Activated B cell treated with CpG ODN at 0.5 μM for 24 hours (primary cell): ENCODE measurements at regions of chr6 and their contacts with region 1.

Region 1: DNA sequence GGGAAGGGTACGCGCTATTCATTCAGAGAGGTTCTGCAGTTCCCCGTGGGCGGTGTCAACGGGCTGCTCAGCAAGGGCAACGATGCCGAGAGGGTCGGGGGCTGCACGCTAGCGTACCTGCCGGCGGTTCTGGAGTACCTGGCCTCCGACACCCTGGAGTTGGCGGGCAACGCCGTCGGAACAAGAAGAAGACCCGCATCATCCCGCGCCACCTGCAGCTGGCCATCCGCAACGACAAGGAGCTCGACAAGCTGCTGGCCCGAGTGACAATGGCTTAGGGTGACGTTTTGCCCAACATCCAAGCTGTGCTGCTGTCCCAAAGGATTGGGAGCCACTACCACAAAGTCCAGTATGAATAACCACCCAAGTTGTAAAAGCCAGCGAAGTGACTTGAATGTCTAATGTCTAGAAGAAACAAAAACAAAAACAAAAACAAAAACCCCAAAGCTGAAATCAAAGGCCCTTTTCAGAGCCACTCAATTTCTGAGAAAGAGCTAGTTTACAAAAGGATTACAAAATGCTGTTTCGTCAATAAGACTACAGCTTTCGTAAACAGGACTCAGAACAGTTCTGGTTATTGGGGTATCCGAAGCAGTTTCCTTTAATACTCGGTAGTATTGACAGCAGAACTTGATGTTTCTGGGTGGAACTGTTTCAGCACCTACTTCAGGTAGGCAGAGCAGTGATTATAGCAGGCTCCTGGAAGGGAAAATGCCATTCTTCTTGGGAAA is 21.9 kb upstream of the SLC17A4 start:
- DNase-seq: no peak
- ATAC-seq: no peak
- H3K4me3 Mint-ChIP-seq: no peak overlapping the region
- H3K27ac Mint-ChIP-seq: no peak overlapping the region
- H3K4me1 Mint-ChIP-seq: no peaks in the 10 kb centered on the region
- H3K27me3 Mint-ChIP-seq: peaks cover 45% of the 10 kb centered on the region
- CTCF ChIP-seq: no peak

Region 2: DNA sequence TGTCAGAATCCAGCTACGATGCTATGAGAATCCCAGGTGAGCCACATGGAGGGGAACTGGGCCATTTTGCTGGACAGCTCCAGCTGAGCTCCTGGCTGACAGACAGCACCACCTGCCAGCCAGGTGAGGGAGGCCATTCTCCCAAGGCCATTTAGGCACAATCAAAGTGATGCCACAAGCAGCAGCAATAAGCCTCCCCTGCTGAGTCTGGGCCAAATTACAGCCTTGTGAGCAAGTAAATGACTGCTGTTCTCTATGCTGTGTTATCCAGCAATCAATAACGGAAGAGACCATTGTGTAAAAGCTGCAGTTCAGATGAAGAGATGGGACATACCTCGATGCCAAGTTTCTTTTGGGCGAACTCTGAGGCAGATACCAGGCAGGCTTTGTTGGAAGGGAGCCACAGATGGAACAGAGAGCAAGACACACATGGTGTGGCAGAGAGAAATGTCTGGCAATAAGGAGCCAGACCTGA is 94.6 kb before region 1 on chr6:
- CTCF ChIA-PET with region 1: no interaction called
- POLR2A ChIA-PET with region 1: no interaction called
- intact Hi-C with region 1: no loop called
- DNase-seq: no peak
- ATAC-seq: no peak
- H3K4me3 Mint-ChIP-seq: no peak overlapping the region
- H3K27ac Mint-ChIP-seq: no peak overlapping the region
- H3K4me1 Mint-ChIP-seq: no peaks in the 10 kb centered on the region
- H3K27me3 Mint-ChIP-seq: peaks cover 42% of the 10 kb centered on the region
- CTCF ChIP-seq: no peak

Region 3: GRCh38 chr6:25913741-25914140 is 181.1 kb after region 1 on chr6:
- CTCF ChIA-PET with region 1: no interaction called
- POLR2A ChIA-PET with region 1: interaction called, 10 read pairs
- intact Hi-C with region 1: no loop called
- DNase-seq: no peak
- ATAC-seq: no peak
- H3K4me3 Mint-ChIP-seq: no peak overlapping the region
- H3K27ac Mint-ChIP-seq: no peak overlapping the region
- H3K4me1 Mint-ChIP-seq: peaks cover 4% of the 10 kb centered on the region
- H3K27me3 Mint-ChIP-seq: peaks cover 5% of the 10 kb centered on the region
- CTCF ChIP-seq: no peak

Region 4: GRCh38 chr6:27002447-27002846 is 1269.8 kb after region 1 on chr6:
- CTCF ChIA-PET with region 1: no interaction called
- POLR2A ChIA-PET with region 1: no interaction called
- intact Hi-C with region 1: no loop called
- DNase-seq: no peak
- ATAC-seq: no peak
- H3K4me3 Mint-ChIP-seq: no peak overlapping the region
- H3K27ac Mint-ChIP-seq: no peak overlapping the region
- H3K4me1 Mint-ChIP-seq: no peaks in the 10 kb centered on the region
- H3K27me3 Mint-ChIP-seq: peaks cover 4% of the 10 kb centered on the region
- CTCF ChIP-seq: no peak